Activated CD4-positive, alpha-beta T cell treated with anti-CD3 and anti-CD28 coated beads for 36 hours (primary cell): ENCODE measurements at regions of chr16 and their contacts with region 1.

Region 1: GRCh38 chr16:1420111-1420540 is 421 bp downstream of the UQCC4 start:
- DNase-seq: peak; percentile 32
- ATAC-seq: no peak
- H3K4me3 Mint-ChIP-seq: peak overlapping the region; percentile 84
- H3K27ac Mint-ChIP-seq: peak overlapping the region; percentile 70
- H3K4me1 Mint-ChIP-seq: peaks cover 25% of the 10 kb centered on the region
- H3K27me3 Mint-ChIP-seq: no peaks in the 10 kb centered on the region

Region 2: GRCh38 chr16:684067-684794 is 735.9 kb before region 1 on chr16 and contains the start of gene JMJD8:
- CTCF ChIA-PET with region 1: no interaction called
- POLR2A ChIA-PET with region 1: interaction called, 3 read pairs
- intact Hi-C with region 1: loop called in 1 of 2 experiments (anchors 5 kb)
- DNase-seq: peak; percentile 99
- ATAC-seq: peak; percentile 80
- H3K4me3 Mint-ChIP-seq: peak within 1 kb of the TSS; percentile 76
- H3K27ac Mint-ChIP-seq: peak within 1 kb of the TSS; percentile 58
- H3K4me1 Mint-ChIP-seq: peaks cover 40% of the 10 kb centered on the region
- H3K27me3 Mint-ChIP-seq: no peaks in the 10 kb centered on the region
- total RNA-seq, gene JMJD8: 26.1 to 31.4 TPM

Region 3: GRCh38 chr16:1351582-1352362 is 68.4 kb before region 1 on chr16 and contains the starts of genes GNPTG and TSR3:
- CTCF ChIA-PET with region 1: no interaction called
- POLR2A ChIA-PET with region 1: no interaction called
- intact Hi-C with region 1: loop called in 1 of 2 experiments (anchors 1 kb)
- DNase-seq: peak; percentile 91
- ATAC-seq: peak; percentile 87
- H3K4me3 Mint-ChIP-seq: peak within 1 kb of the TSS; percentile 85
- H3K27ac Mint-ChIP-seq: peak within 1 kb of the TSS; percentile 79
- H3K4me1 Mint-ChIP-seq: peaks cover 37% of the 10 kb centered on the region
- H3K27me3 Mint-ChIP-seq: no peaks in the 10 kb centered on the region
- total RNA-seq, gene GNPTG: 16.3 to 17.4 TPM
- total RNA-seq, gene TSR3: 37.6 to 58.7 TPM

Region 4: GRCh38 chr16:1492923-1493745 is 73.0 kb after region 1 on chr16 and contains the start of gene TELO2:
- CTCF ChIA-PET with region 1: no interaction called
- POLR2A ChIA-PET with region 1: interaction called, 8 read pairs
- intact Hi-C with region 1: loop called in 1 of 2 experiments (anchors 1 kb)
- DNase-seq: peak; percentile 94
- ATAC-seq: peak; percentile 89
- H3K4me3 Mint-ChIP-seq: peak within 1 kb of the TSS; percentile 92
- H3K27ac Mint-ChIP-seq: peak within 1 kb of the TSS; percentile 97
- H3K4me1 Mint-ChIP-seq: peaks cover 15% of the 10 kb centered on the region
- H3K27me3 Mint-ChIP-seq: no peaks in the 10 kb centered on the region
- total RNA-seq, gene TELO2: 48.1 to 60.0 TPM

Region 5: DNA sequence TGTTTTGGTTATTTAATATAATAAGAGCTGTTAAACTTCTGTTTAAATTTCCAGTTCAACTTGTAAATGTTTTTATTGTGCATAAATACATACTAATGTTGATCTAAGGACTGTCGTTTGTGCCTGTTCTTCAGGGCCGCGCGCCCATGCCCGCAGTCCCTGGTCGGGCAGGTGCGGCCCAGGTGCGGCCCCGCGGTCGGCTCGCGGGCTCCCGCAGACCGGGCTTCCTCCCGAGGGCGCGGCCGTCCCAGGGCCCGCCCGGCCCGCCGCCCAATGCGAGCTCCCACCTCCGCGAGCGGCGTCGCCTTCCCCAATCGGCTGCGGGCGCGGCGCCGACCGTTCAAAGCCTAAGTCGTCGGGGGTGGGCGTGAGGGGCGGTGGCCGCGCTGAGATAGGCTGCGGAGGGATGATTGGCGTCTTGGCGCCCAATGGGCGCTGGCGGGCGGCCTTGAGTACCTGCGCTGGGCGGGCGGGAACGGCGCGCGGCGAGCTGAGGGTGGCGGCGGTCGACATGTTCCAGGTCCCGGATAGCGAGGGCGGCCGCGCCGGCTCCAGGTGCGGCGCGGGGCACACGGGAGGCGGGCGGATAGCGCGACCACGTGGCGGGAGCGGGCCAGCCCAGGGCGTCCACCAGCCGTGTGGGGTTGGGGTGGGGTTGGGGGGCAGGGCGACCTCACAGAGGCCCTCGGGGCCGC is 257.8 kb after region 1 on chr16 and contains the start of gene JPT2:
- CTCF ChIA-PET with region 1: interaction called, 4 read pairs
- POLR2A ChIA-PET with region 1: no interaction called
- intact Hi-C with region 1: loop called in 1 of 2 experiments (anchors 1 kb)
- DNase-seq: peak; percentile 98
- ATAC-seq: peak; percentile 99
- H3K4me3 Mint-ChIP-seq: peak within 1 kb of the TSS; percentile 94
- H3K27ac Mint-ChIP-seq: peak within 1 kb of the TSS; percentile 89
- H3K4me1 Mint-ChIP-seq: peaks cover 26% of the 10 kb centered on the region
- H3K27me3 Mint-ChIP-seq: no peaks in the 10 kb centered on the region
- total RNA-seq, gene JPT2: 77.1 to 111 TPM

Region 6: GRCh38 chr16:1782352-1783091 is 362.4 kb after region 1 on chr16 and contains the starts of genes NUBP2 and SPSB3:
- CTCF ChIA-PET with region 1: interaction called, 5 read pairs
- POLR2A ChIA-PET with region 1: interaction called, 4 read pairs
- intact Hi-C with region 1: loop called in 1 of 2 experiments (anchors 1 kb)
- DNase-seq: peak; percentile 99
- ATAC-seq: peak; percentile 93
- H3K4me3 Mint-ChIP-seq: peak within 1 kb of the TSS; percentile 94
- H3K27ac Mint-ChIP-seq: peak within 1 kb of the TSS; percentile 85
- H3K4me1 Mint-ChIP-seq: peaks cover 26% of the 10 kb centered on the region
- H3K27me3 Mint-ChIP-seq: no peaks in the 10 kb centered on the region
- total RNA-seq, gene NUBP2: 34.4 to 42.4 TPM
- total RNA-seq, gene SPSB3: 12.5 to 13.6 TPM

Region 7: GRCh38 chr16:2682209-2683021 is 1262.3 kb after region 1 on chr16 and contains the start of gene KCTD5:
- CTCF ChIA-PET with region 1: no interaction called
- POLR2A ChIA-PET with region 1: no interaction called
- intact Hi-C with region 1: loop called in 1 of 2 experiments (anchors 2 kb)
- DNase-seq: peak; percentile 98
- ATAC-seq: peak; percentile 92
- H3K4me3 Mint-ChIP-seq: peak within 1 kb of the TSS; percentile 100
- H3K27ac Mint-ChIP-seq: peak within 1 kb of the TSS; percentile 98
- H3K4me1 Mint-ChIP-seq: peaks cover 28% of the 10 kb centered on the region
- H3K27me3 Mint-ChIP-seq: no peaks in the 10 kb centered on the region
- total RNA-seq, gene KCTD5: 24.0 to 26.2 TPM